Natural killer cell (primary cell): ENCODE measurements at regions of chr9 and their contacts with region 1.

Region 1: GRCh38 chr9:128688512-128689292 is at the start of gene SET:
- DNase-seq: peak; percentile 92 to 97
- ATAC-seq: peak; percentile 77 to 92 (median 84)
- H3K4me3 ChIP-seq: peak within 1 kb of the TSS; percentile 66
- H3K4me3 Mint-ChIP-seq: peak within 1 kb of the TSS; percentile 99
- H3K27ac ChIP-seq: peak within 1 kb of the TSS; percentile 97
- H3K27ac Mint-ChIP-seq: peak within 1 kb of the TSS; percentile 89 to 96
- H3K4me1 ChIP-seq: peaks cover 53% of the 10 kb centered on the region
- H3K4me1 Mint-ChIP-seq: peaks cover 62 to 70% of the 10 kb centered on the region in 2 donors
- H3K27me3 ChIP-seq: no peaks in the 10 kb centered on the region
- H3K27me3 Mint-ChIP-seq: no peaks in the 10 kb centered on the region
- CTCF ChIP-seq: no peak
- total RNA-seq, gene SET: 331 to 341 (median 334) TPM

Region 2: GRCh38 chr9:128656416-128657343 is 32.0 kb before region 1 on chr9 and contains the start of gene DYNC2I2:
- intact Hi-C with region 1: loop called (anchors 2 kb)
- DNase-seq: peak; percentile 92 to 99
- ATAC-seq: peak; percentile 96 to 97 (median 96)
- H3K4me3 ChIP-seq: peak within 1 kb of the TSS; percentile 54
- H3K4me3 Mint-ChIP-seq: peak within 1 kb of the TSS; percentile 92
- H3K27ac ChIP-seq: peak within 1 kb of the TSS; percentile 91
- H3K27ac Mint-ChIP-seq: peak within 1 kb of the TSS; percentile 97
- H3K4me1 ChIP-seq: peaks cover 14% of the 10 kb centered on the region
- H3K4me1 Mint-ChIP-seq: peaks cover 0 to 8% of the 10 kb centered on the region in 2 donors
- H3K27me3 ChIP-seq: no peaks in the 10 kb centered on the region
- H3K27me3 Mint-ChIP-seq: no peaks in the 10 kb centered on the region
- CTCF ChIP-seq: no peak
- total RNA-seq, gene DYNC2I2: 5.2 to 6.3 (median 5.5) TPM